H1 (cell line): ENCODE measurements at regions of chr5 and their contacts with region 1.

Region 1: DNA sequence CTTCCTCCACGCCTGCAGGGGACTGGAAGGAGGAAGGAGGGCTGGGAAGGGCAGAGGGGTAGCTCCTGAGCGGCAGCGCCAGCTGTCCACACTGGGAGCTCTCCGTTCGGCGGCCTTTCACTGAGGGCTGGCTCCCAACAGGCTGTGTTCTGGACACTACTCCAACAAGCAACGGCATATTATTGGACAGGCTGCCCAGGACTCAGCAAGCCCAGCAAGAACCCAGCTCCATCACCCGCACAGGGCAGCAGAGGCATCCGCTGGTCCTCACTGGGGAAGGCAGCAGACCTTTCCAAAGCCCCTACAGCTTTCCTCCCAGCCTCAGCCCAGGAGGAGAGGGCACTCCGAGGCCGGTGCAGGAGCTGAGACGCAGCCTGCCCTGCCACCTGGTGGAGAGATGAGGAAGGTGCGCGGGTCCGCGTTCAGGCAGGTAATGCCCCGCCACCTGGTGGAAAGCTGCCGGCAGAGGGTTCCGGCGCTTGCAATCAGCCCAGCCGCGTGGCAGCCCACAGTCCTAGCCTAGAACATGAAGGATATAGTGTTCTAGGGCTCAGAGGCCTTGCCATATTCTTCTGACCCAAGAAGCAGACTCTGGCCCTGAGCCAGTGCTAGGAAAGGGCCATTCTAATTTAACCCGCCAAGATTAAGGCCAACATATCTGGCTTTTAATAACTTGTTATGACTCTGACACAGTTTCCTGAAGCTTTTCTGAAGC is 74.4 kb downstream of the NRG2 start:
- DNase-seq: peak; percentile 74 to 99
- H3K4me3 ChIP-seq: no peak overlapping the region
- H3K27ac ChIP-seq: no peak overlapping the region
- H3K4me1 ChIP-seq: no peaks in the 10 kb centered on the region
- H3K27me3 ChIP-seq: no peaks in the 10 kb centered on the region; a peak in 1 of 7 replicates
- CTCF ChIP-seq: peak; percentile 100
- EP300 ChIP-seq: peak in 1 of 2 experiments; percentile 55; a peak in 1 of 3 replicates
- POLR2A ChIP-seq: no peak
- RAD21 ChIP-seq: peak; percentile 99 to 100

Region 2: GRCh38 chr5:139765409-139766217 is 203.1 kb before region 1 on chr5:
- CTCF ChIA-PET with region 1: interaction called, 11 read pairs
- POLR2A ChIA-PET with region 1: no interaction called
- DNase-seq: peak in 1 of 2 experiments; percentile 97
- H3K4me3 ChIP-seq: peak overlapping the region; percentile 15 to 73 (median 66); a peak in 7 of 8 replicates
- H3K27ac ChIP-seq: no peak overlapping the region
- H3K4me1 ChIP-seq: peaks cover 9 to 32% (median 15%) of the 10 kb centered on the region in 4 experiments
- H3K27me3 ChIP-seq: peaks cover 8 to 36% (median 26%) of the 10 kb centered on the region in 4 experiments
- CTCF ChIP-seq: peak in 2 of 3 experiments; percentile 65 to 75; a peak in 3 of 4 replicates
- EP300 ChIP-seq: no peak
- POLR2A ChIP-seq: no peak
- RAD21 ChIP-seq: peak; percentile 66 to 71

Region 3: DNA sequence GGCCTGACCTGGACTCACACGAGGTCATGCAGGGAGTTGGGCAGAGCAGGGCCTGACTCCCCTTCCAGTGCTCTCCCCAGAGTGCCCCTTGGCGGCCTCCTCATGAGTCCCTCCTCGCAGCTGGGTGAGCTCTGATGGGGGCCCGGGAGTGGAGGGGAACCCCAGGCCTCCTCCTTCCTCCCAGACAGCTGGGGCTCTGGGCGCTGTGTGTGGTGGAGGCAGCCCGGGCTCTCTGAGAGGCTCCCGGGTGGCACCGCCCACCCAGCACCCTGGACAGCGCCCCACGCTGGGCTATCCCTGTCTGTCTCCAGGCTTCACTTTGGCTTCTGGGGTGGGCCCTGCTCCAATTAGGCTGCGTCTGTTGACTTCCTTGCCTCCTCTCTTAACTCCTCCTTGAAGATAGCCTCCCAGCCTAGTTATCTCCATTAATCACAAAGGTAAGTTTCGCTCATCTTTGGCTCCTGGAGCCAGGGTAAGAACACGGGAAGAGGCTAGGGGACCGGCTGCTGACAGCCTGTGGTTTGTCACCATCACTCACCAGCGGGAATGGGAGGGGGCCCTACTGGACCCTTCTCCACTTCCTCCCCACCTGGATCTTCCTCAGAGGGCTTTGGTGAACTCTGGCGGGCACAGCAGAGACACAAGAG is 160.1 kb before region 1 on chr5:
- CTCF ChIA-PET with region 1: interaction called, 13 read pairs
- POLR2A ChIA-PET with region 1: no interaction called
- DNase-seq: peak in 1 of 2 experiments; percentile 88
- H3K4me3 ChIP-seq: no peak overlapping the region
- H3K27ac ChIP-seq: no peak overlapping the region
- H3K4me1 ChIP-seq: no peaks in the 10 kb centered on the region
- H3K27me3 ChIP-seq: peaks cover 0 to 3% (median 1%) of the 10 kb centered on the region in 4 experiments; a peak in 1 of 7 replicates
- CTCF ChIP-seq: no peak
- EP300 ChIP-seq: no peak
- POLR2A ChIP-seq: no peak
- RAD21 ChIP-seq: no peak

Region 4: DNA sequence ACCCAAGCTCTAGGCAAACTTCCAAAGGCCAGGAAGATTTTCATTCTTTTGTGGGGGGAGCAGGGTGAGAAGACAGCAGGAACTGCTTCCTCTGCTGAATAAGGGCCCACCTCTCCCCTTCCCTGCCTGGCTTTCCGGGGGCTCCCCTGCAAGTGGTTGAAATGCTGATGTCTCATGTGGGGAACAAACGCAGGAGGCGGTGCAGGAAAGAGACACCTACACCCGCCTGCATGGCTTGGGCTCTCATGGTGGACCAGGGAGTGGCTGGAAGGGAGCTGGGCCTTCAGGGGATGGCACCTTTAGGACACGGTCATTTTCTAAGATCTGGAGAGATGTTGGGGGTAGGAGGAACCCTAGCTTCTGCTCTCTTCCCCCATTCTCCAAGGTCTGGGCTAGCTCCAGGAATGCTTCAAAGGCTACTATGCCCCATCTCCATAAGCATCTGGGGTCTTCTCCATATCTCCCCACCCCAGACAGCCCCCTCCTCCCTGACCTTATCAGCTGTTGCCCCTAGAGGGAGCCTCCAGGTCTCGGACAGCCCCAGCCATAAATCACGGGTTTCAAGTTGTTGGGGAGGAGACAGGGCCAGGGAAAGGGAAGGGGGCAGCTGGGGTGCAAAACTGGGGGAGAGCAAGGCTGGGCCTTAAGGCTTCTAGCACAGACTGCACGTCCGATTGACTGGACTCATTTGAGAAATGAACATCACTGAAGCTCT is 96.5 kb before region 1 on chr5:
- CTCF ChIA-PET with region 1: interaction called, 135 read pairs
- POLR2A ChIA-PET with region 1: no interaction called
- DNase-seq: no peak
- H3K4me3 ChIP-seq: no peak overlapping the region
- H3K27ac ChIP-seq: no peak overlapping the region
- H3K4me1 ChIP-seq: peaks cover 0 to 9% (median 5%) of the 10 kb centered on the region in 4 experiments; a peak in 6 of 7 replicates
- H3K27me3 ChIP-seq: peaks cover 0 to 2% (median 0%) of the 10 kb centered on the region in 4 experiments; a peak in 2 of 7 replicates
- CTCF ChIP-seq: peak; percentile 64 to 73 (median 67)
- EP300 ChIP-seq: no peak
- POLR2A ChIP-seq: no peak
- RAD21 ChIP-seq: peak; percentile 51 to 64

Region 5: DNA sequence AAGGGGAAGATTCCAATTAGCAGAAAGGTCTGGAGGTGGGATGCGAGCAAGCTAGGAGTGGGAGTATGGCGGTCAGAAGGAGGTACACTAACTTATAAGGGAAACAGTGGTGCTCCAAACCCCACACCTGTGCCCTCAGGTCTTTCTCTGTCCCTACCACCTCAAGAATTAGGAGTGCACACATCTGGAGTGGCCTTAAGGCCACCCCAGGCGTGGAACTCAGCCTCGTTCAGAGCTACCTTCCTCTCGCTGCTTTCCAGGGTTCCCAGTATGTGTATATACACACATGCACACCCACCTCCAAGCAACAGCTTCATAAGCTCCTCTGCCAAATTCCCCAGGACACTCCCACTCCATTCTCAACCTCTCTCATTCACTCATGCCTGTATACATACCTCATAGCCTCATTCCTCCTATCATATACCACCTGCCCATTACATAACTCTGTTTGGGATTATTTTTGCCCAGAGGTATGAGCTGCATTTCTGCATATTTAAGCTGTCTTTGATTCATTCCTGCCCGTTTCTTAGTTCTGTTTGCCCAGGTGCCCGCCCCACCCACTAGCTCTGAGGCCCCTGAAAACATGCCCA is 54.4 kb before region 1 on chr5:
- CTCF ChIA-PET with region 1: interaction called, 181 read pairs
- POLR2A ChIA-PET with region 1: no interaction called
- DNase-seq: peak in 1 of 2 experiments; percentile 32
- H3K4me3 ChIP-seq: no peak overlapping the region
- H3K27ac ChIP-seq: no peak overlapping the region
- H3K4me1 ChIP-seq: peaks cover 2 to 7% (median 5%) of the 10 kb centered on the region in 4 experiments; a peak in 2 of 7 replicates
- H3K27me3 ChIP-seq: no peaks in the 10 kb centered on the region
- CTCF ChIP-seq: no peak
- EP300 ChIP-seq: no peak
- POLR2A ChIP-seq: no peak
- RAD21 ChIP-seq: no peak

Region 6: GRCh38 chr5:139985733-139986132 is 17.0 kb after region 1 on chr5:
- CTCF ChIA-PET with region 1: interaction called, 107 read pairs
- POLR2A ChIA-PET with region 1: no interaction called
- DNase-seq: no peak
- H3K4me3 ChIP-seq: no peak overlapping the region
- H3K27ac ChIP-seq: no peak overlapping the region
- H3K4me1 ChIP-seq: peaks cover 0 to 3% (median under 1%) of the 10 kb centered on the region in 4 experiments; a peak in 4 of 7 replicates
- H3K27me3 ChIP-seq: peaks cover 0 to 4% (median 1%) of the 10 kb centered on the region in 4 experiments; a peak in 2 of 7 replicates
- CTCF ChIP-seq: no peak
- EP300 ChIP-seq: no peak
- POLR2A ChIP-seq: no peak
- RAD21 ChIP-seq: no peak

Region 7: GRCh38 chr5:140093179-140093578 is 124.5 kb after region 1 on chr5:
- CTCF ChIA-PET with region 1: no interaction called
- POLR2A ChIA-PET with region 1: no interaction called
- DNase-seq: no peak
- H3K4me3 ChIP-seq: no peak overlapping the region
- H3K27ac ChIP-seq: no peak overlapping the region
- H3K4me1 ChIP-seq: no peaks in the 10 kb centered on the region
- H3K27me3 ChIP-seq: no peaks in the 10 kb centered on the region
- CTCF ChIP-seq: no peak
- EP300 ChIP-seq: no peak
- POLR2A ChIP-seq: no peak
- RAD21 ChIP-seq: no peak

Region 8: DNA sequence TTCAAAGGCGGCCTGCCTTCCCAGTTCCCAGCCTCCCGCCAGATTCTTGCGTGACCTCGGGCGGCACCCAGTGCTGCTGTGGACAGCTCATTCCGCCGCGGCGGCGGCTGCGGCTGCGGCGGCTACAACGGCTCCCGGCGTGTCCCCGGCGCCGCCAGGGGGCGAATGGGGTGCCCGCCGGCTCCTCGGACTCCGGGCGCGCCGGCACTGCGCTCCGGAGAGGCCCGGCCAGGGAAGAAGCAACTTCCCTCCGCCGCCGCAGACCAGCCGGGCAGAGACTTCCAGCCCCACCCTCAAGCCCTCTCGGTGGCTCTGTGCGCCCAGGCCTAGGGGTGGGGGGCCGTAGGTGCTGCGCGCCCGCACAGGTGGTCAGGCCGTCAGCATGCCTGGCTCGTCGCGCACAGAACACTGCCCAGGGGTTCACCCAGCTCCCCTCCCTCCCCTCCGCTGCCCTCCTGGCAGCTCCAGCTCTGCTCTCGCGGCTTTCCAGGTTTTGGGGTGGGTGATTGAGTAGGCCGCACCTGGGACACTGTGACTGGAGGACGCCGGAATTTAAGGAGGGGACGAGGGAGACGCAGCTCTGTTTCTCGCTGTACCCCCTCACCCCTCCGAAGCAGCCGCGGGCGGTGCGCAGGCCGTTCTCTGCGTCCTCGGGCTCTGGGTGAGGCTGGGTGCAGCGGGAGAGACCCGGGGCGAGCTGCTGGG is 177.3 kb after region 1 on chr5:
- CTCF ChIA-PET with region 1: interaction called, 13 read pairs
- POLR2A ChIA-PET with region 1: no interaction called
- DNase-seq: peak in 1 of 2 experiments; percentile 83
- H3K4me3 ChIP-seq: peak overlapping the region; percentile 28 to 82 (median 72)
- H3K27ac ChIP-seq: no peak overlapping the region
- H3K4me1 ChIP-seq: peaks cover 0 to 9% (median 0%) of the 10 kb centered on the region in 4 experiments; a peak in 2 of 7 replicates
- H3K27me3 ChIP-seq: peaks cover 25 to 51% (median 37%) of the 10 kb centered on the region in 4 experiments
- CTCF ChIP-seq: peak; percentile 49 to 70 (median 54)
- EP300 ChIP-seq: peak in 1 of 2 experiments; percentile 73; a peak in 1 of 3 replicates
- POLR2A ChIP-seq: no peak
- RAD21 ChIP-seq: peak; percentile 16 to 52; a peak in 3 of 4 replicates